ENCODE measurements at regions of chr1 and their contacts with region 1.

Region 1: DNA sequence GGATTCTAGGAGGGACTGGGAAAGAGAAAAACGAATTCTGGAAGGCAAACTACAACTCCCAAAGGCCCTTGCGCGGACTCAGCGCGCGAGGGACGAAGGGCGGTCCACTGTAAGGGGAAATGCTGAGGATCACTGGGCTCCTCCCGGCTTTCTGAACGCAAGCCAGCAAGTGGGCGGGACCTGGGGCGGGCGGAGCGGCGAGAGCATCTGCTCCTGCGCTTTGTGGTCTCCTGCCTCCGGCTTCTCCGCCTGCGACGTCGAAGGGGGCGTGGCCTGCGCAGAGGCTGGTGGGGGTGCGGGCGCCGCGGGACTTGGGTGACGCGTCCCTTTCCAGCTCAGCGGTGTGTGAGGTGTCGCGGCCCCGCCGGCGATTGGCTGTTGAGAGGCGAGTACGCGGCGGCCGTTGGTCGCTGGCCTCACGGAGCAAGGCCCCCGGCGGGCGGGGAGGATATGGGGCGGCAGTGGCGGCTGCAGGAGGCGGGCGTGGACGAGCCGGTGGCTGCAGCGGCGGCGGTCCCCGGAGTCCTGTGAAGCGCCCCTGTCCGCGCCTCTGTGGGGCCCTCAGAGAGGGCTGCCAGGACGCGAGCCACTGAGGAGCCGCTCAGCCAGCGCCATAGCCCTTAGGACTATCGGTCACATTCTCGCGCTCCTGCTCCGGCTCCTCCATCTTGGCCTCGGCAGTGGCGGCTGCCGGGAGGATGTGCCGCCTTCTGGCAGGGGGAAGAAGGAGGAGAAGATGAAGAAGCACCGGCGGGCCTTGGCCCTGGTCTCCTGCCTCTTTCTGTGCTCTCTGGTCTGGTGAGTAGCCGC is at the start of gene SUCO:
- DNase-seq: peak; percentile 99 to 100 (median 100)
- H3K4me3 ChIP-seq: peak within 1 kb of the TSS; percentile 88 to 97
- H3K4me3 Mint-ChIP-seq: peak within 1 kb of the TSS; percentile 93 to 100 (median 97)
- H3K27ac ChIP-seq: peak within 1 kb of the TSS; percentile 99
- H3K27ac Mint-ChIP-seq: peak within 1 kb of the TSS; percentile 97 to 100 (median 100)
- H3K4me1 ChIP-seq: peaks cover 49% of the 10 kb centered on the region
- H3K4me1 Mint-ChIP-seq: peaks cover 37 to 62% (median 46%) of the 10 kb centered on the region in 4 donors
- H3K27me3 ChIP-seq: no peaks in the 10 kb centered on the region
- H3K27me3 Mint-ChIP-seq: peaks cover 0 to 3% of the 10 kb centered on the region in 2 donors
- total RNA-seq, gene SUCO: 71.6 to 74.4 TPM

Region 2: GRCh38 chr1:171841050-171841940 is 691.6 kb before region 1 on chr1 and contains the start of gene DNM3:
- CTCF ChIA-PET with region 1: no interaction called
- POLR2A ChIA-PET with region 1: no interaction called
- intact Hi-C with region 1: loop called (anchors 5 kb)
- DNase-seq: peak; percentile 70 to 89 (median 85)
- H3K4me3 ChIP-seq: peak within 1 kb of the TSS; percentile 43 to 66
- H3K4me3 Mint-ChIP-seq: peak within 1 kb of the TSS; percentile 88 to 93 (median 89)
- H3K27ac ChIP-seq: peak within 1 kb of the TSS; percentile 41
- H3K27ac Mint-ChIP-seq: peak within 1 kb of the TSS; percentile 62 to 94 (median 81)
- H3K4me1 ChIP-seq: peaks cover 16% of the 10 kb centered on the region
- H3K4me1 Mint-ChIP-seq: peaks cover 12 to 20% (median 15%) of the 10 kb centered on the region in 4 donors
- H3K27me3 ChIP-seq: peaks cover 13% of the 10 kb centered on the region
- H3K27me3 Mint-ChIP-seq: peaks cover 7 to 10% of the 10 kb centered on the region in 2 donors
- total RNA-seq, gene DNM3: 2.0 to 2.7 TPM

Region 3: GRCh38 chr1:172545396-172546004 is 12.6 kb after region 1 on chr1:
- CTCF ChIA-PET with region 1: no interaction called
- POLR2A ChIA-PET with region 1: interaction called, 12 read pairs
- intact Hi-C with region 1: no loop called
- DNase-seq: no peak
- H3K4me3 ChIP-seq: no peak overlapping the region
- H3K4me3 Mint-ChIP-seq: no peak overlapping the region
- H3K27ac ChIP-seq: no peak overlapping the region
- H3K27ac Mint-ChIP-seq: no peak overlapping the region
- H3K4me1 ChIP-seq: peaks cover 90% of the 10 kb centered on the region
- H3K4me1 Mint-ChIP-seq: peaks cover 27 to 53% (median 40%) of the 10 kb centered on the region in 4 donors
- H3K27me3 ChIP-seq: no peaks in the 10 kb centered on the region
- H3K27me3 Mint-ChIP-seq: no peaks in the 10 kb centered on the region

Region 4: DNA sequence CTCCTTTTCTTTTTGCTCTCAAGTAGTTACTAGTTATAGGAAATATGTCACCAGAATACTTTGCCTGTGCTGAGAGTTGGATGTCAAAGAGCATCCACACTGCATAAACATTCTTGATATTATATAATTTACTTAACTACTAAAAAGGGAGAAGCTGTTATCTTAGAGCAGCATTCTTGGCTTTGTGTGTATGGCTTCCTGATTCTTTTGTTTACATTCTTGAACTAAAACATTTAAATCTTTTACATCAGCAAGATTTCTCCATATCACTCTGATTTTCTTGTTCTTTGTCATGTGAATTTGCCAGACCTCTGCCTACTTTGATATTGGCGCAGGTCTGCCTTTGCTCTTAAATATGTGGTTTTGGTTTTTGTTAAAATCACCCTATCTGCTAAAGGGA is 48.9 kb after region 1 on chr1:
- CTCF ChIA-PET with region 1: no interaction called
- POLR2A ChIA-PET with region 1: no interaction called
- intact Hi-C with region 1: no loop called
- DNase-seq: no peak
- H3K4me3 ChIP-seq: no peak overlapping the region
- H3K4me3 Mint-ChIP-seq: no peak overlapping the region
- H3K27ac ChIP-seq: no peak overlapping the region
- H3K27ac Mint-ChIP-seq: peak overlapping the region in 2 of 7 donors; percentile 5 to 19
- H3K4me1 ChIP-seq: no peaks in the 10 kb centered on the region
- H3K4me1 Mint-ChIP-seq: peaks cover 4 to 9% (median 6%) of the 10 kb centered on the region in 4 donors
- H3K27me3 ChIP-seq: no peaks in the 10 kb centered on the region
- H3K27me3 Mint-ChIP-seq: no peaks in the 10 kb centered on the region

Region 5: GRCh38 chr1:172719694-172720138 is 186.8 kb after region 1 on chr1:
- CTCF ChIA-PET with region 1: interaction called, 11 read pairs
- POLR2A ChIA-PET with region 1: interaction called, 5 read pairs
- intact Hi-C with region 1: loop called (anchors 2 kb)
- DNase-seq: peak in 4 of 5 donors; percentile 54 to 60 (median 56)
- H3K4me3 ChIP-seq: no peak overlapping the region
- H3K4me3 Mint-ChIP-seq: peak overlapping the region in 1 of 8 donors; percentile 9
- H3K27ac ChIP-seq: no peak overlapping the region
- H3K27ac Mint-ChIP-seq: peak overlapping the region in 3 of 7 donors; percentile 3 to 37 (median 5)
- H3K4me1 ChIP-seq: peaks cover 16% of the 10 kb centered on the region
- H3K4me1 Mint-ChIP-seq: peaks cover 24 to 43% (median 31%) of the 10 kb centered on the region in 4 donors
- H3K27me3 ChIP-seq: no peaks in the 10 kb centered on the region
- H3K27me3 Mint-ChIP-seq: no peaks in the 10 kb centered on the region

Region 6: GRCh38 chr1:173867753-173868265 is 1334.9 kb after region 1 on chr1 and contains the start of gene GAS5:
- CTCF ChIA-PET with region 1: no interaction called
- POLR2A ChIA-PET with region 1: interaction called, 18 read pairs
- intact Hi-C with region 1: loop called (anchors 1 kb)
- DNase-seq: peak; percentile 98 to 100 (median 99)
- H3K4me3 ChIP-seq: peak within 1 kb of the TSS; percentile 71 to 79
- H3K4me3 Mint-ChIP-seq: peak within 1 kb of the TSS; percentile 95 to 99 (median 96)
- H3K27ac ChIP-seq: peak within 1 kb of the TSS; percentile 89
- H3K27ac Mint-ChIP-seq: peak within 1 kb of the TSS; percentile 94 to 99 (median 97)
- H3K4me1 ChIP-seq: peaks cover 84% of the 10 kb centered on the region
- H3K4me1 Mint-ChIP-seq: peaks cover 52 to 92% (median 63%) of the 10 kb centered on the region in 4 donors
- H3K27me3 ChIP-seq: no peaks in the 10 kb centered on the region
- H3K27me3 Mint-ChIP-seq: no peaks in the 10 kb centered on the region
- total RNA-seq, gene GAS5: 676 to 709 TPM

Measured in CD4-positive, alpha-beta memory T cell (primary cell).